B cell (primary cell): ENCODE measurements at regions of chr6 and their contacts with region 1.

Region 1: DNA sequence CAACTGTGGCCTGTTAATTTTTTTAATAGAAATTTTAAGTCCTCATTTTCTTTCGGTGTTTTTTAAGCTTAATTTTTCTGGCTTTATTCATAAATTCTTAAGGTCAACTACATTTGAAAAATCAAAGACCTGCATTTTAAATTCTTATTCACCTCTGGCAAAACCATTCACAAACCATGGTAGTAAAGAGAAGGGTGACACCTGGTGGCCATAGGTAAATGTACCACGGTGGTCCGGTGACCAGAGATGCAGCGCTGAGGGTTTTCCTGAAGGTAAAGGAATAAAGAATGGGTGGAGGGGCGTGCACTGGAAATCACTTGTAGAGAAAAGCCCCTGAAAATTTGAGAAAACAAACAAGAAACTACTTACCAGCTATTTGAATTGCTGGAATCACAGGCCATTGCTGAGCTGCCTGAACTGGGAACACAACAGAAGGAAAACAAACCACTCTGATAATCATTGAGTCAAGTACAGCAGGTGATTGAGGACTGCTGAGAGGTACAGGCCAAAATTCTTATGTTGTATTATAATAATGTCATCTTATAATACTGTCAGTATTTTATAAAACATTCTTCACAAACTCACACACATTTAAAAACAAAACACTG is 10.1 kb downstream of the HFE start:
- DNase-seq: peak; percentile 80
- ATAC-seq: peak; percentile 80
- H3K4me3 ChIP-seq: no peak overlapping the region
- H3K4me3 Mint-ChIP-seq: no peak overlapping the region
- H3K27ac ChIP-seq: no peak overlapping the region
- H3K27ac Mint-ChIP-seq: no peak overlapping the region
- H3K4me1 ChIP-seq: peaks cover 6 to 9% of the 10 kb centered on the region in 2 donors
- H3K4me1 Mint-ChIP-seq: peaks cover 17% of the 10 kb centered on the region
- H3K27me3 ChIP-seq: no peaks in the 10 kb centered on the region
- H3K27me3 Mint-ChIP-seq: no peaks in the 10 kb centered on the region
- CTCF ChIP-seq: peak; percentile 89

Region 2: GRCh38 chr6:26065952-26066380 is 31.4 kb before region 1 on chr6:
- CTCF ChIA-PET with region 1: interaction called, 605 read pairs
- POLR2A ChIA-PET with region 1: interaction called, 6 read pairs
- intact Hi-C with region 1: loop called (anchors 1 kb)
- DNase-seq: peak; percentile 83
- ATAC-seq: peak; percentile 88
- H3K4me3 ChIP-seq: no peak overlapping the region
- H3K4me3 Mint-ChIP-seq: no peak overlapping the region
- H3K27ac ChIP-seq: no peak overlapping the region
- H3K27ac Mint-ChIP-seq: no peak overlapping the region
- H3K4me1 ChIP-seq: peaks cover 0 to 4% of the 10 kb centered on the region in 2 donors
- H3K4me1 Mint-ChIP-seq: peaks cover 7% of the 10 kb centered on the region
- H3K27me3 ChIP-seq: peaks cover 0 to 2% (median 0%) of the 10 kb centered on the region in 4 experiments
- H3K27me3 Mint-ChIP-seq: no peaks in the 10 kb centered on the region
- CTCF ChIP-seq: peak; percentile 90

Region 3: GRCh38 chr6:26187981-26188635 is 90.7 kb after region 1 on chr6:
- CTCF ChIA-PET with region 1: no interaction called
- POLR2A ChIA-PET with region 1: no interaction called
- intact Hi-C with region 1: no loop called
- DNase-seq: no peak
- ATAC-seq: no peak
- H3K4me3 ChIP-seq: peak overlapping the region; percentile 58 to 88 (median 82)
- H3K4me3 Mint-ChIP-seq: peak overlapping the region; percentile 93
- H3K27ac ChIP-seq: peak overlapping the region; percentile 72 to 91
- H3K27ac Mint-ChIP-seq: peak overlapping the region; percentile 95
- H3K4me1 ChIP-seq: peaks cover 12 to 28% of the 10 kb centered on the region in 2 donors
- H3K4me1 Mint-ChIP-seq: peaks cover 33% of the 10 kb centered on the region
- H3K27me3 ChIP-seq: no peaks in the 10 kb centered on the region
- H3K27me3 Mint-ChIP-seq: no peaks in the 10 kb centered on the region
- CTCF ChIP-seq: no peak

Region 4: DNA sequence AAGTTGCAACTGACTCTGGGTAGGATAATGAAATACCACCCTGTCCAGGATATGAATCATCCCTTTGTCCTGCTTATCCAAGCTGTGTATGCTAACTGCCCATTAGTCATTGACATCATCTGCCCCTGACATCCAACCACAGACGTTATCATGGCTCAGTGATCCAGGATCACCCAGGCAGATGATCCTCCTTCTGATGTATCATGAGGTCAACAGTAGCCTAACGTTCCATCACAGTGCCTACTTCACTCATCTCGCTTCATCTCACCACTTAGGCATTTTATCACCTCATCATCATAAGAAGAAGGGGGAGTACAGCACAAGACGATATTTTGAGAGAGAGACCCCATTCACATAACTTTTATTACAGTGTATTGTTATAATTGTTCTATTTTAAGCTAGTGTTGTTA is 254.2 kb after region 1 on chr6:
- CTCF ChIA-PET with region 1: no interaction called
- POLR2A ChIA-PET with region 1: no interaction called
- intact Hi-C with region 1: no loop called
- DNase-seq: no peak
- ATAC-seq: no peak
- H3K4me3 ChIP-seq: no peak overlapping the region
- H3K4me3 Mint-ChIP-seq: no peak overlapping the region
- H3K27ac ChIP-seq: no peak overlapping the region
- H3K27ac Mint-ChIP-seq: no peak overlapping the region
- H3K4me1 ChIP-seq: no peaks in the 10 kb centered on the region
- H3K4me1 Mint-ChIP-seq: no peaks in the 10 kb centered on the region
- H3K27me3 ChIP-seq: peaks cover 0 to 22% (median 8%) of the 10 kb centered on the region in 4 experiments
- H3K27me3 Mint-ChIP-seq: peaks cover 23% of the 10 kb centered on the region
- CTCF ChIP-seq: no peak

Region 5: DNA sequence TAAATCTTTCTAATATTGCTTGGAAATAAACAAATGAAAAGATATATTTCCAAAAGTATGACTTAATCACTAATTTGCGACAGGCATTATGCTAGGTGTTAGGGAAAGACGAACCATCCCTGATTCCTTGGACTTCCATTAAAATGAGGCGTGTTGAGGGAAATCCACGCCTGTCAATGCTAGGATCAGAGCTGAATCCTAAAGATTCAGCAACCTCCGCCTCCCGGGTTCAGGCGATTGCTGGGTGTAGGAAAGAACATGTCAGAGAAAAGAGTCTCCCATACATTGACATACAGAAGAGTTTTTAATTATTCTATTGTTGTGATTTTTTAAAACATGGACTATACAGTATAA is 1133.4 kb after region 1 on chr6:
- CTCF ChIA-PET with region 1: no interaction called
- POLR2A ChIA-PET with region 1: no interaction called
- intact Hi-C with region 1: no loop called
- DNase-seq: no peak
- ATAC-seq: no peak
- H3K4me3 ChIP-seq: no peak overlapping the region
- H3K4me3 Mint-ChIP-seq: no peak overlapping the region
- H3K27ac ChIP-seq: no peak overlapping the region
- H3K27ac Mint-ChIP-seq: no peak overlapping the region
- H3K4me1 ChIP-seq: peaks cover 2 to 7% of the 10 kb centered on the region in 2 donors
- H3K4me1 Mint-ChIP-seq: peaks cover 3% of the 10 kb centered on the region
- H3K27me3 ChIP-seq: peaks cover 0 to 46% (median 36%) of the 10 kb centered on the region in 4 experiments
- H3K27me3 Mint-ChIP-seq: peaks cover 68% of the 10 kb centered on the region
- CTCF ChIP-seq: no peak